ENCODE measurements at regions of chr11 and their contacts with region 1.

Region 1: GRCh38 chr11:43282607-43283440 is 29.0 kb upstream of the API5 start:
- DNase-seq: peak; percentile 59
- CTCF ChIP-seq: peak; percentile 95

Region 2: DNA sequence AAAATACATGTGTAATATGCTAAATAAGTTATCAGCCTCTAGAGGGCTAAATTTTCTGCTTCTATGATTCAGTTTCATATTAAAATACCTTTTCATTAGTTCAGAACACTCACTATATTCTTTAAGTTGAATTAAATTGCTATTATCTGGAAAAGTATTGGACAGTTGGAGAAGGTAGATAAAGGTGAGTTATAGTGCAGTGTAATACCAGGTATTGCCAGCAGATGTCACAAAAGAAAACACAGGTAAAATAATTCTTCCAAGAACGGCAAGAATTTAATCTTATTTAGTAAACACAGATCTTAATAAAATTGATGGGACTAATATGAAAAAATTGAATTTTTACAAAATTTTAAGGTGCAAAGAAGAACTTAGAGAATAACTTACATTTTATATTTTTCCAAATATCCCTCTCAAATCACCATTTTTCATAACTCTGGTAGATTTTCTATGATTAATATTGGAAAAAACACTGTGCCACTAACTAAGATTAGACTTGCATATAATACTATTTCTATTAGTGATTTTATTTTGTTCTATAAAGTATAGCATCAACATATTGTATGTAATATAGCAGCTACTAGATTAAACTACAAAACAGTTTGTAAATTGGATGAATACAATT is 1821.7 kb before region 1 on chr11:
- CTCF ChIA-PET with region 1: interaction called, 24 read pairs
- POLR2A ChIA-PET with region 1: no interaction called
- DNase-seq: no peak
- CTCF ChIP-seq: peak; percentile 62

Region 3: GRCh38 chr11:43021466-43021865 is 261.4 kb before region 1 on chr11:
- CTCF ChIA-PET with region 1: interaction called, 11 read pairs
- POLR2A ChIA-PET with region 1: no interaction called
- DNase-seq: peak; percentile 12
- CTCF ChIP-seq: no peak

Region 4: GRCh38 chr11:43298397-43298796 is 15.6 kb after region 1 on chr11:
- CTCF ChIA-PET with region 1: interaction called, 13 read pairs
- POLR2A ChIA-PET with region 1: no interaction called
- DNase-seq: no peak
- CTCF ChIP-seq: no peak

Region 5: GRCh38 chr11:43419460-43419859 is 136.6 kb after region 1 on chr11:
- CTCF ChIA-PET with region 1: interaction called, 16 read pairs
- POLR2A ChIA-PET with region 1: no interaction called
- DNase-seq: peak; percentile 18
- CTCF ChIP-seq: peak; percentile 64